ENCODE measurements at regions of chr17 and their contacts with region 1.

Region 1: GRCh38 chr17:8248751-8249607 is at the start of gene PFAS:
- H3K4me3 ChIP-seq: peak within 1 kb of the TSS; percentile 77
- H3K27ac ChIP-seq: peak within 1 kb of the TSS; percentile 91
- H3K4me1 ChIP-seq: peaks cover 6% of the 10 kb centered on the region
- CTCF ChIP-seq: no peak

Region 2: DNA sequence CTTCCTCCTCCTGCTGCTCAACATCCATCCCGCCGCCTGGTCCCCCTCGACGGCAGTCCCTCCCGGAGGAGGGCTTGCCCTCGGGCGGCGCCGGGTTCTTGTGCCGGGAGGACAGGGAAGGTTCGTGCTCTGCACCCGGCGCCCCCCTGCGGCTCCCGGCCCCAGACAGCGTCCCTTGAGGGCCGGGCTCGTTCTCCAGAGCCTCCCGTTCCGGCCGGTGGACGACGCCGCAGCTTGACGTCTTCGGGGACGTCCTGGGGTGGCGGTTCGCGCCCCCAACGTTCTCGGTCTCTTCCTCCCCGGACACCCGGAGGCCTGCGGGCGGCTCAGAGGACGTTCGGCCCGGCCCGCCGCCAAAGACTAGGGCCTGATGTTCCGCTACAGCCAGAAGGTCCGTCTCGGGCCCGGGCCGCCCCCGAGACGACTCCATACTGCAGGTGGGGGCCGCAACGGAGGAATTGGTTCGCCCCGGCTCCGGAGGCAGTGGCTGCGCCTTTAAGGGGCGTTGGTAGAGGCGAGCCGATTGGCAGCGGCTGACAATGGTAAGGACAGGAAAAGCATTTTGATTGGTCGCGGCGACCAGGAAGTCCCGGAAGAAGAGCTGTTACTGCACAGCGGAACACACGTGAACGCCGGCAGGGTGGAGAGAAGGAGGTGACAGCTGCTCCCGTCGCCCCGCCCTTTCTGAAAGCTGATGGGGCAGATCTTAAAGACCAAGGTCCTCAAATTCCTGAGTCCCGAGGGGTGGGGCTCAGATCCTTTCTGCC is 59.1 kb before region 1 on chr17 and contains the start of gene BORCS6:
- CTCF ChIA-PET with region 1: no interaction called
- POLR2A ChIA-PET with region 1: interaction called, 20 read pairs
- H3K4me3 ChIP-seq: peak within 1 kb of the TSS; percentile 75
- H3K27ac ChIP-seq: peak within 1 kb of the TSS; percentile 75; the same call in 1 of the 2 replicates
- H3K4me1 ChIP-seq: peaks cover 13% of the 10 kb centered on the region
- CTCF ChIP-seq: peak; percentile 88

Region 3: DNA sequence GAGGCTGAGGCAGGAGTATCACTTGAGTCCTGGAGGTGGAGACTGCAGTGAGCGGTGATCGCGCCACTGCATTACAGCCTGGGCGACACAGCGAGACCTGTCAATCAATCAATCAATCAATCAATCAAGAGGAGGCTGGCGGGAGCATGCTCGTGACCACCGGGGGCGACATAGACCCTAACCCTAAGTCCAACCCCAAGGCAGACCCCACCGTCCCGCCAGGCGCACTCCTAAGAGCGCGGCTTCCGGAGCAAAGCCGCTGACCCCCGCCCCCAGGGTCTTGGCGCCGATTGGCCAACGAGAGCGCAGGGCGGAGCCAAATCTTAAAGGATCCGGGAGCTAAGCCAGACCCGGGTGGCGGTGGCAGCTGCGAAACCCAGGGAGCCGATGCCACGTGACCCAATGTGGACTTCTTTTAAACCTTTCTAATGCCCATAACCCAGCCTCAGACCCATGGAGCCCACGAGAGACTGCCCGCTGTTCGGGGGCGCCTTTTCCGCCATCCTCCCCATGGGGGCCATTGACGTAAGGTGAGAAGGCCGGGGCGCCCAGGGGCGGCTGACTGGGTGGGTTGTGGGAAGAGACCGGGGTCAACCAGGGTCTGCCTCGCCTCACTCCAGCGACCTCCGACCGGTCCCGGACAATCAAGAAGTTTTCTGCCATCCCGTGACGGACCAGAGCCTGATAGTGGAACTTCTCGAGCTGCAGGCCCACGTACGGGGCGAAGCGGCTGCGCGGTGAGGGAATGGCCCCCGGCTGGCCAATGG is 39.5 kb after region 1 on chr17 and contains the start of gene RANGRF:
- CTCF ChIA-PET with region 1: interaction called, 3 read pairs
- POLR2A ChIA-PET with region 1: interaction called, 22 read pairs
- H3K4me3 ChIP-seq: peak within 1 kb of the TSS; percentile 76
- H3K27ac ChIP-seq: peak within 1 kb of the TSS; percentile 79
- H3K4me1 ChIP-seq: peaks cover 9% of the 10 kb centered on the region
- CTCF ChIP-seq: peak; percentile 51; the same call in 1 of the 2 replicates

Region 4: DNA sequence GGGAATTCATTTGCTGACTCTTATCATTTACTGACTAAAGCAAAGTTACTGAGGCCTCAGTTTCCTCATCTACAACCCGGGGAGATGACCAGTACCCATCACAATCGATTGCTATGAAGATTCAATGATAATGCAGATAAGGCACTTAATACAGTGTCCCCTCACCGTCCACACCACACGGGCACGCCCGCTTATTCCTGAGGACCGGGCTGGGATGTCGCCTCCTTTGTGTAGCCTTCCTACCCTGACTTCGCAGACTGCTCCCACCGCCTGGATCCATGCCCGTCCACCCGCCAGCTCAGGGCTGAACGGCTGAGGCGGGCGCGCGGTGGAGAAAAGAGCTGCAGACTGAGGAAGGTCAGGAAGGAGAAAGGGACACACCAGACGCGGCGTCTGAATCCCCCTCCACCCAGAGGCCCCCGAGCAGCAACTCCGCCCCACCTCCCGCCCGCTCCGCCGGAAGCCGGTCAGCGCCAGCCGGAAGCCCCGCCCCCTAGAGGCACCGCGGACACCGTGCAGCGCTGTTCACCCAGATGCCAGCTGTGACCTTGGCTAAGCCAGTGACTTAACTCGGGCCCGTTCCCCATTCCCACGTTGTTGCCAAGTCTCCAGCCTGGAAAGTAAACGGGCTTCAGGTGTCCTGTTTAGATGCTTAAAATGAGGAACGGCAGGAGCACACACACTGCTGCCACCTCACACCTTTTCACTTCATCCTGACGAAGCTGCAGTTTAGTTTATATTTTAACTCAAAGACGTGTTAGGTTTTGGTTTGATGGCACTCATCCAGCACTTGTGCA is 127.5 kb after region 1 on chr17 and contains the start of gene KRABD2:
- CTCF ChIA-PET with region 1: interaction called, 3 read pairs
- POLR2A ChIA-PET with region 1: interaction called, 13 read pairs
- H3K4me3 ChIP-seq: peak within 1 kb of the TSS; percentile 69
- H3K27ac ChIP-seq: peak within 1 kb of the TSS; percentile 90
- H3K4me1 ChIP-seq: peaks cover 16% of the 10 kb centered on the region
- CTCF ChIP-seq: peak; percentile 96

Measured in HEK293 (cell line).